Motor neuron (in vitro differentiated cells): ENCODE measurements at regions of chr19 and their contacts with region 1.

Region 1: DNA sequence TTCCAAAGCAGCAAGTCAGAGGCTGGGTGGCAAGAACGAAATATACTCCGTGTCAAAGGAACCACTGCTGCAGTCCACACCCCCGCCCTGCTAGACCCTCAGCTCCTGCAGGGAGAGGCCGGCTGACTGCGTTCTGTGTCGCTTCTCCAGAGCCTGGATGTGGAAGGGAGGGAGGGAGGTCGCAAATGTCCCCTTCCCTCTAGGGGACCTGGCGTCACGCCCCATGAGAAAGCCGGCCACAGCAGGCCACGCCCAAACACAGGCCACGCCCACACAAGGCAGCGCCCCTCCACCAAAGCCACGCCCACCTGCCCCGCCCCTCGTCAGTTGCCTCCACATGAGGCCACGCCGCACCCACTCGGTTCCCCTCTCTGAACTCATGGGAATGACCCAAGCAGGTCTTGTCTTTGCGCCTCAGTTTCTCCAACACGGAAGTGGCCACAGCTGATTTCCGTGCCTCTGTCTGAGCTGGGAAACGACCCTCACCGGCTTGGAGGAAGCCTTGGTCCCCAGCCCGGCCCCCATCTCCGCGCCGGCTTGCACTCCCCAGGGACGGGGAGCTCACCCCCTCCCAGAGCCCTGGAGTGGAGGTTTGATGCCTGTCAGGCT is 38.4 kb upstream of the TCF3 start:
- ATAC-seq: peak in 5 of 8 experiments; percentile 26 to 85 (median 71)
- H3K4me3 ChIP-seq: no peak overlapping the region
- H3K27ac ChIP-seq: no peak overlapping the region
- H3K4me1 ChIP-seq: no peaks in the 10 kb centered on the region

Region 2: DNA sequence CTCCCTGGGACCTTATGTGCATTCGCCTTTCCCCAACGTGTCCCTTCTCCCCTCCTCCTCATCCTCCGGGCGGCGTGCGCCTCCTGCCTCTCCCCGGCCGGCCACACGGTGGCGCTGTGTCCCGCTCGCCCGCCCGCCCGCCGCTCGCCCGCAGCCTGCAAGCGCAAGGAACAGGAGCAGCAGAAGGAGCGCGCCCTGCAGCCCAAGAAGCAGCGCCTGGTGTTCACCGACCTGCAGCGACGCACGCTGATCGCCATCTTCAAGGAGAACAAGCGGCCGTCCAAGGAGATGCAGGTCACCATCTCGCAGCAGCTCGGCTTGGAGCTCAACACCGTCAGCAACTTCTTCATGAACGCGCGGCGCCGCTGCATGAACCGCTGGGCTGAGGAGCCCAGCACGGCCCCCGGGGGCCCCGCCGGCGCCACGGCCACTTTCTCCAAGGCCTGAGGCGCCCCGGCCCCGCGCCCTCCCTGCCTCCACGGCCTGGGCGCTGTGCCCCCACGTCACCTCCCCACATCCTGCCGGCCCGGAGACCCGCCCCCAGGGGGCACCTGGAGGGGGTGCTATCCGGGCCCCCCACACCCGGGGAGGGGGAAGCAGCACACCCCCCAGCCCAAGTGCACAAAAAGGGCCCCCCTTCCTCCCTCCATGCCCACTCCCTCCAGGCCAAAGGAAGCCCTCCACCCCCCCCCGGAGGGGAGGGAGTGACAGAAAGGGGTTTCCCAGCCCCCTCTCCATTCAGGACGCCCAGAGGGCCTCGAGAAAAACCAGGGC is 84.4 kb after region 1 on chr19:
- in situ Hi-C with region 1: loop called in 2 of 9 experiments (anchors 25 kb)
- ATAC-seq: peak in 3 of 8 experiments; percentile 33 to 87 (median 64)
- H3K4me3 ChIP-seq: no peak overlapping the region
- H3K27ac ChIP-seq: no peak overlapping the region
- H3K4me1 ChIP-seq: peaks cover 0 to 9% of the 10 kb centered on the region in 2 donors